GM12878 (cell line): ENCODE measurements at regions of chr7 and their contacts with region 1.

Region 1: DNA sequence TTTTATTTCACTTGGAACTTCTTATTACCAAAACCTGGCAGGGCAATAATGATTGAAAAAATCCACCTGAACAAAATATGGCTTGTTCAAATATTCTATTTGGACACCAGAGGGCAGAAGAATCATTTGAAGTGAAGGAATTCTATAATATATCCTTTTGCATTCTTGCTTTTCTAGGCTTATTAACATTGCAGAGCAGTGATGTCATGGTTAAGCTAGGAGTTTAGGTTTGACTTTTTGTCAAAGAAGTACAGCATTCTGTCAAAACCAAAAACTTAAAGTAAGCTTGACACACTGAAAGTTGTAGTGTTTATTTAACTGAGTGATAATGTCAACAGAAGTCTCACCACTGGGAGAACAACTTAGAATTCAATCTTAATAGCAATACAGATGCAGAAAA is 156.0 kb downstream of the SEMA3D start:
- DNase-seq: no peak
- ATAC-seq: peak; percentile 56
- H3K4me3 ChIP-seq: no peak overlapping the region
- H3K27ac ChIP-seq: no peak overlapping the region
- H3K4me1 ChIP-seq: no peaks in the 10 kb centered on the region
- H3K27me3 ChIP-seq: no peaks in the 10 kb centered on the region
- CTCF ChIP-seq: peak; percentile 22 to 52 (median 42); a peak in 5 of 6 replicates
- EP300 ChIP-seq: no peak
- POLR2A ChIP-seq: no peak
- RAD21 ChIP-seq: peak; percentile 44

Region 2: DNA sequence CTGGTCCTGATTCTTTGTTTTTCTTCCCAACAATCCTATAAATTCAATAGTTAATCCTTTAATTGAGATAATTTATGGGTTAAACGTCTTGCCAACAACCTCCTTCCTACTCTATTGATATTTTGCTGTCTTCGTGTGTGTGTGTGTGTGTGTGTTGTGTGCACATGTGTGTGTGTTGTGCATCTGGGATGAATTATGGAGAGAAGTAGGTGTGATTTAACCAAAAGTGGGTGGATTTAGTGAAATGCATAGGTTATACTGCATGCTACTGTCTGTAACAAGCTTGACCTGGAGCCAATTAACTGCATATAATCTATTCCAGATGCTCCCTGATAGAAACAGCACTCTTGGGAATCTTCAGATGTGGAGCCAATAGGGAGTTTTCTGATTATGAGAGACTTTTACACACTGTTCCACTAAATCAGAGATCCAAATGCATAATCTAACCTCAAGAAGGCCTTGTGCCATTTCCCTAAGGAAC is 94.8 kb after region 1 on chr7:
- CTCF ChIA-PET with region 1: no interaction called
- POLR2A ChIA-PET with region 1: no interaction called
- RAD21 ChIA-PET with region 1: no interaction called
- SMC1A ChIA-PET with region 1: no interaction called
- in situ Hi-C with region 1: no loop called
- intact Hi-C with region 1: no loop called
- DNase-seq: no peak
- ATAC-seq: no peak
- H3K4me3 ChIP-seq: no peak overlapping the region
- H3K27ac ChIP-seq: no peak overlapping the region
- H3K4me1 ChIP-seq: no peaks in the 10 kb centered on the region
- H3K27me3 ChIP-seq: no peaks in the 10 kb centered on the region
- CTCF ChIP-seq: no peak
- EP300 ChIP-seq: no peak
- POLR2A ChIP-seq: no peak
- RAD21 ChIP-seq: no peak

Region 3: GRCh38 chr7:85554236-85555178 is 523.6 kb after region 1 on chr7:
- CTCF ChIA-PET with region 1: interaction called, 45 read pairs
- POLR2A ChIA-PET with region 1: no interaction called
- RAD21 ChIA-PET with region 1: interaction called, 4 read pairs
- SMC1A ChIA-PET with region 1: interaction called, 3 read pairs
- in situ Hi-C with region 1: no loop called
- intact Hi-C with region 1: loop called (anchors 1 kb)
- DNase-seq: no peak
- ATAC-seq: peak; percentile 74
- H3K4me3 ChIP-seq: no peak overlapping the region
- H3K27ac ChIP-seq: no peak overlapping the region
- H3K4me1 ChIP-seq: no peaks in the 10 kb centered on the region
- H3K27me3 ChIP-seq: no peaks in the 10 kb centered on the region
- CTCF ChIP-seq: peak; percentile 48 to 66 (median 66); a peak in 5 of 6 replicates
- EP300 ChIP-seq: no peak
- POLR2A ChIP-seq: no peak
- RAD21 ChIP-seq: peak; percentile 69

Region 4: DNA sequence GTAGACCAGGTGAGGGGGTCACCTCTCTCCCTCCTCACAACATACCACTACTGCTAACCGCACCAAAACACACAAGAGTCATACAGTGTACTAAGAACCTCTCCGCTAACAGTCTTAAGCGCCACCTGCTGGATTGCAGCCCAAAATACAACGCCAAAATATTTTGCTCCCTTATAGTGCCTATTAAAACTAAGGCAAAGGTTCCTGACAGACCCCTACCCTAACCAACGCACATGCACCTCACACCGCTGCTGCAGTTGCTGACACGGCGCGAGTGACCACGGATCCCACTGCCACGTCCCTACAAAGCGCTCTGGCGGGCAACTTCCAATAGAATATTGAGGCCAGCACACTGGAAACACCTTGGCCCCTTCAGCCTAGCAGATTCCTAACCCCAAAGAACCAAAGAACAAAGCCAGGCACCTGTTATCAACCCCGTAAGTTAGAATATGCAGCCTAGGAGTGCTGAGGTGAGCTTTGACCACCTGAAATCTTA is 719.6 kb after region 1 on chr7:
- CTCF ChIA-PET with region 1: no interaction called
- POLR2A ChIA-PET with region 1: no interaction called
- RAD21 ChIA-PET with region 1: no interaction called
- SMC1A ChIA-PET with region 1: interaction called, 3 read pairs
- in situ Hi-C with region 1: loop called (anchors 25 kb)
- intact Hi-C with region 1: loop called (anchors 1 kb)
- DNase-seq: no peak
- ATAC-seq: peak; percentile 93
- H3K4me3 ChIP-seq: no peak overlapping the region
- H3K27ac ChIP-seq: no peak overlapping the region
- H3K4me1 ChIP-seq: no peaks in the 10 kb centered on the region
- H3K27me3 ChIP-seq: no peaks in the 10 kb centered on the region
- CTCF ChIP-seq: peak; percentile 65 to 70 (median 66)
- EP300 ChIP-seq: no peak
- POLR2A ChIP-seq: no peak
- RAD21 ChIP-seq: peak; percentile 66

Region 5: DNA sequence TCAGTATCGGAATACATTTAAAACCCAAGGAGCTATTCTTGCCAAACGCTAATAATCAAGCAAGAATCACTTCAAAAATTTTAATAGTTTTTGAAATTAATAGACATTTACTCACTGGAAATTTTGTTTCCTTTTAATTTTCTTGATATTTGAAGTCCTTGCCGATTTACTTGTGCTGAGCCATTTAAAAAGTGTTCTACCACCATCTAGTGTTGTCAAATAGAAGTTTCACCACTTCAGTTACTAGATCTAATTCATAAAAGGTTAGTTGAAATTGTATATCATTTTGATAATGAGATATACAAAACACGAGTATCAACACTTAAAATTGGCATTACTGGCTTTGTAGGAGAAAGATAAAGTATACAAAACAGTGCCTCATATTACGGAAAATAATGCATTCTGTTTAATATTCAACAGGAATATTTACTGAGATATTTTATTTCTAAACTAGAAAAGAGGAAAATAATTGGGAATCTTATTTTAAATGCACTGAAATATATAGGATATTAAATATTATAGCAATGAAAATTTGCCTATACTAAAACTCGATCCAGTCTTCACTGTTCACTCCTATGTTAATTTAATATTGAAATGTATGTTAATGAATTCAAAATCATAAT is 820.8 kb after region 1 on chr7:
- CTCF ChIA-PET with region 1: interaction called, 4 read pairs
- POLR2A ChIA-PET with region 1: no interaction called
- RAD21 ChIA-PET with region 1: no interaction called
- SMC1A ChIA-PET with region 1: no interaction called
- in situ Hi-C with region 1: no loop called
- intact Hi-C with region 1: loop called (anchors 5 kb)
- DNase-seq: no peak
- ATAC-seq: no peak
- H3K4me3 ChIP-seq: no peak overlapping the region
- H3K27ac ChIP-seq: no peak overlapping the region
- H3K4me1 ChIP-seq: no peaks in the 10 kb centered on the region
- H3K27me3 ChIP-seq: no peaks in the 10 kb centered on the region
- CTCF ChIP-seq: peak in 2 of 3 experiments; percentile 8 to 29; a peak in 1 of 6 replicates
- EP300 ChIP-seq: no peak
- POLR2A ChIP-seq: no peak
- RAD21 ChIP-seq: 0 out of 2 replicates have a peak, but pooled peaks have one; percentile 17

Region 6: DNA sequence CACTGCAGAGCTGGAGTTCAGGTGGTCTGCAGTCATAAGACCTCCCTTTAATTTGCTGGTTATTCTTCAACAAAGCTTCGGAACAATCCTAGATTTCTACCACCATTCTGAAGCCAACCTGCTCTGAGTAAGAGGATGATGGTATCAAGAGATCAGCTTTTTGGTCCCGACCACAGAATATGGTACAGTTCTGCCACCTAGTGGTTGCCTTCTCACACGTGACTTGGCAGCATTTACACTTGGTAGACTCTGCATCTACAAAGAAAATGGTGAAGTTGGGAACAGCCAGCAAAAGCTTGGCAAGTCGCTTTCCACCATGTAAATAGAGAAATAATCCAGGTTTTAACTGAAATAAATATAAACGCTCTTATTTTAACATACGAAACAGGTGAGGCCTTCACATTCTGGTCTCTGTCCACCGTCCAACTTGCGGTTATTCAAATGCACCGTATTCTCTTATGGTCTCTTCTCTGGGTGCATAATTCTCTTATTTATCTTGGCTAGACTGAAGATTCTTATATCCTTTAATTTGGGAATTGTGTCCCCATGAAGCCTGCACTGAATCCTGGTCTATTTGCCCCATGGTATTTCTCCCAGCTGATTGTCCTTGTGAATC is 1438.9 kb after region 1 on chr7:
- CTCF ChIA-PET with region 1: no interaction called
- POLR2A ChIA-PET with region 1: no interaction called
- RAD21 ChIA-PET with region 1: no interaction called
- SMC1A ChIA-PET with region 1: no interaction called
- in situ Hi-C with region 1: no loop called
- intact Hi-C with region 1: loop called (anchors 2 kb)
- DNase-seq: peak; percentile 27
- ATAC-seq: peak; percentile 96
- H3K4me3 ChIP-seq: no peak overlapping the region
- H3K27ac ChIP-seq: no peak overlapping the region
- H3K4me1 ChIP-seq: no peaks in the 10 kb centered on the region
- H3K27me3 ChIP-seq: no peaks in the 10 kb centered on the region
- CTCF ChIP-seq: peak; percentile 67 to 81 (median 79)
- EP300 ChIP-seq: no peak
- POLR2A ChIP-seq: no peak
- RAD21 ChIP-seq: peak; percentile 86